OCI-LY7 (cell line): ENCODE measurements at regions of chr9 and their contacts with region 1.

Region 1: GRCh38 chr9:119761737-119762288 is 392.6 kb upstream of the BRINP1 start:
- DNase-seq: peak; percentile 76
- H3K4me3 ChIP-seq: peak overlapping the region; percentile 31
- H3K27ac ChIP-seq: peak overlapping the region; percentile 50
- H3K4me1 ChIP-seq: peaks cover 29% of the 10 kb centered on the region
- CTCF ChIP-seq: no peak

Region 2: GRCh38 chr9:119736491-119737454 is 25.0 kb before region 1 on chr9:
- CTCF ChIA-PET with region 1: no interaction called
- POLR2A ChIA-PET with region 1: no interaction called
- intact Hi-C with region 1: loop called (anchors 1 kb)
- DNase-seq: peak; percentile 81
- H3K4me3 ChIP-seq: peak overlapping the region; percentile 29
- H3K27ac ChIP-seq: peak overlapping the region; percentile 73
- H3K4me1 ChIP-seq: peaks cover 27% of the 10 kb centered on the region
- CTCF ChIP-seq: no peak

Region 3: GRCh38 chr9:119773823-119774222 is 12.0 kb after region 1 on chr9:
- CTCF ChIA-PET with region 1: no interaction called
- POLR2A ChIA-PET with region 1: no interaction called
- intact Hi-C with region 1: no loop called
- DNase-seq: no peak
- H3K4me3 ChIP-seq: no peak overlapping the region
- H3K27ac ChIP-seq: no peak overlapping the region
- H3K4me1 ChIP-seq: no peaks in the 10 kb centered on the region
- CTCF ChIP-seq: no peak